CD4-positive, alpha-beta memory T cell (primary cell): ENCODE measurements at regions of chr3 and their contacts with region 1.

Region 1: DNA sequence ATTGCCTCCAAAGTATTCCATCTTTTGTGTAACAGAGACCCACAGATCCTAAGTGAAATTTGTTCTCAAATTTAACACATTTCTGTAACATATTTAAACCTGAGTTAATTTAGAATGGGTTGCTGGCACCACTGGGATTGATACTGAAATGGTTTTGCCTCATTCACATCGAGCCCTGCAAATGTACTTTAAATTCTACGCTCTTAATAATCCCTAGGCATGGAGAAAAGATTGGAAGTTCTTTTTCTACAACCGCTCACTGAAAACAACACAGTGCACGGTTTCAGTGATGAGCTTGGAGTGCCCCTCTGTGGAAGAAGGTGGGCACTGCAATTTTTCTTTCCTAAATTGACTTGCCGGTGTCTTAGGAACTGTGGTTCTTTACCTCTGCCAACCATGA is 109.9 kb upstream of the ATP11B start:
- DNase-seq: peak; percentile 37 to 64 (median 51)
- H3K4me3 ChIP-seq: no peak overlapping the region
- H3K4me3 Mint-ChIP-seq: peak overlapping the region; percentile 30 to 88 (median 71)
- H3K27ac ChIP-seq: no peak overlapping the region
- H3K27ac Mint-ChIP-seq: peak overlapping the region in 1 of 7 donors; percentile 36
- H3K4me1 ChIP-seq: peaks cover 15% of the 10 kb centered on the region
- H3K4me1 Mint-ChIP-seq: peaks cover 6 to 10% (median 8%) of the 10 kb centered on the region in 4 donors
- H3K27me3 ChIP-seq: peaks cover 7% of the 10 kb centered on the region
- H3K27me3 Mint-ChIP-seq: peaks cover 30% of the 10 kb centered on the region in 2 donors

Region 2: DNA sequence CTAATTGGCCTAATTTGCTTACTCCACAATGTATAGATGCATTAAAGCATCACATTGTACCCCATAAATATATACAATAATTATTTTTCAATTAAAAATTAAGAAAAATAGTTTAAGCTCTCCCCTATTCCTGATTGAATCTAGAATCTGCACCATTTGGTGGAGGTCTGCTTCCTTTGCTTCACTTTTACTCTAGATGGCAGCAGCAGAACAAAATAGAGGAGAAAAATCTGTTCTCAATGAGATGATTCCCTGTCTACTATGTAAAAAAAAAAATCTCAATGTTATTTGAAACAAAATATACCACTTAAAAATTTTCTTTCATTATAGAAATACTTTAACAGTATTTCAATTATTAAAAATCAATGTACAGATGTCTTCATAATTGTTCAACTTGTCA is 1880.6 kb before region 1 on chr3:
- CTCF ChIA-PET with region 1: no interaction called
- POLR2A ChIA-PET with region 1: no interaction called
- intact Hi-C with region 1: loop called (anchors 2 kb)
- DNase-seq: no peak
- H3K4me3 ChIP-seq: no peak overlapping the region
- H3K4me3 Mint-ChIP-seq: no peak overlapping the region
- H3K27ac ChIP-seq: no peak overlapping the region
- H3K27ac Mint-ChIP-seq: no peak overlapping the region
- H3K4me1 ChIP-seq: no peaks in the 10 kb centered on the region
- H3K4me1 Mint-ChIP-seq: no peaks in the 10 kb centered on the region
- H3K27me3 ChIP-seq: no peaks in the 10 kb centered on the region
- H3K27me3 Mint-ChIP-seq: peaks cover 2 to 3% of the 10 kb centered on the region in 2 donors

Region 3: DNA sequence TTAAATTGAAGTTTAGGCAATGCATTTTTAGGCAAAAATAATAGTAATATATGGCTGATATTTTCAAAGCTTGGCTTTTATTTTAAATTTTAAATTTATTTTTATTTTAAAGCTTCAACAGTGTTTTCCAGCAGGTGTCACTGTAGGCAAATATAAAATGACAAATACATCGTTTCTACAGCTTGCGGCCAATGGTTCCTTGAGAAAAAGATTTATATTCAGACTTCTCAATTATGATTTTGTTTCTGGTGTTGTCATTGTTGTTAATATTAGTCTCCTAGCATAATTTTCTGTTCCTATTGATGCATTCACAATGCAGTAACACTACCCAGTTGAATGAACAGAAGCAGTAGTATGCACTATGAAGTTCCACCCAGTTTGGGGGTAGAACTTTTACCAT is 1473.2 kb before region 1 on chr3:
- CTCF ChIA-PET with region 1: interaction called, 3 read pairs
- POLR2A ChIA-PET with region 1: no interaction called
- intact Hi-C with region 1: loop called (anchors 5 kb)
- DNase-seq: no peak
- H3K4me3 ChIP-seq: no peak overlapping the region
- H3K4me3 Mint-ChIP-seq: no peak overlapping the region
- H3K27ac ChIP-seq: no peak overlapping the region
- H3K27ac Mint-ChIP-seq: no peak overlapping the region
- H3K4me1 ChIP-seq: no peaks in the 10 kb centered on the region
- H3K4me1 Mint-ChIP-seq: no peaks in the 10 kb centered on the region
- H3K27me3 ChIP-seq: no peaks in the 10 kb centered on the region
- H3K27me3 Mint-ChIP-seq: no peaks in the 10 kb centered on the region

Region 4: DNA sequence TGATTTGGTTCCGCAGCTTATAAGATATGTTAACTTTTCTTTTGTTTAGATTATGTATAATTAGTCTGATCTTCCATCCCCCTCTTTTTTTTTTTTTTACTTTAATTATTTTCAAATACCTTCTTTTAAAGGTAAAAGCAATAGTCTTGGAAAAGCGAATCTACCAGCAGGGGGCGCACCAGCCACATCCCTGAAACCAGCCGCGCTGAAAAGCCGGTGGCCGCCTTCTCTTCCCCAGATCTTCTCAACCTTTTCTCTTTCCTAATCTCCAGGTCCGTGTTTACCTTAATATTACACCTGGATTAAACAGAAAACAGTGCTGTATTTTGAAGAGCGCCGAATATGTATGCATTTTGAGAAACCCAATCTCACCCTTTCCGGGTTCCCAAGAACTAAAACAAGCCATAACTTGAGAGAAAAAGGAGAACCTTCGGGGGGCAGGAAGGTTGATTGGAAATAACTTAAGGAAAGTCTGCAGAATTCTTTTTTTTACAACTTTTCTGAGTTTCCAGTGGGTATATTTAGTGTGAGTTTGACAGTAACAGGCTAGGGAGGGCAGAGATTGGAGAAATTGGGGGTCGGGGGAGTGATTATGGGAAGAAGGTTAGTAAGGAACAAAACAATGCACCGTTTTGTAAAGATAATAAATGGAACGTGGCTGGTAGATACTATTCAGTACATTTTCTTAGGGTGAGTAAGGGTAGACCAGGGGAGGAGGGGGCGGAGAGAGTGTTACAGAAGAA is 973.7 kb before region 1 on chr3:
- CTCF ChIA-PET with region 1: interaction called, 21 read pairs
- POLR2A ChIA-PET with region 1: no interaction called
- intact Hi-C with region 1: no loop called
- DNase-seq: peak in 3 of 5 donors; percentile 31 to 42 (median 41)
- H3K4me3 ChIP-seq: no peak overlapping the region
- H3K4me3 Mint-ChIP-seq: peak overlapping the region in 7 of 8 donors; percentile 13 to 74 (median 47)
- H3K27ac ChIP-seq: no peak overlapping the region
- H3K27ac Mint-ChIP-seq: peak overlapping the region in 2 of 7 donors; percentile 58 to 68
- H3K4me1 ChIP-seq: peaks cover 11% of the 10 kb centered on the region
- H3K4me1 Mint-ChIP-seq: peaks cover 5 to 14% (median 6%) of the 10 kb centered on the region in 4 donors
- H3K27me3 ChIP-seq: peaks cover 57% of the 10 kb centered on the region
- H3K27me3 Mint-ChIP-seq: peaks cover 46 to 51% of the 10 kb centered on the region in 2 donors

Region 5: DNA sequence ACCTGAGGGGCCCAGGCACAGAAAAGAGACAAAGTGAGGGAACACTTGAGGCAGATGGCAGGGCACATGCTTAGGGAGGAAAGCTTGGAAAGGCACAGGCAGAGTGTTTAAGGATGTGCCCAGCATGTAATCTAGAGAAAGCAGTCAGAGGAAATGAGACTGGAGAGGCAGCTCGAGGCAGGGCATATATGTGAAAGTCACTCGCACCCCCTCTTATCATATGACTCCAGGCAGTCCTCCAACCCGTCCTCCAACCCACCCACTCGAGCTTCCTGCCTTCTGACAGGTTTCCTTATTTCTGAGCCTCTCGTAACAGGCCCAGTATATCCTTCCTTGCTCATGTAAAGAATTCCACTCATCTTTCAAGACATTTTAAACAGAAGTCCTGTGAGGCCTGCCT is 677.8 kb before region 1 on chr3:
- CTCF ChIA-PET with region 1: no interaction called
- POLR2A ChIA-PET with region 1: no interaction called
- intact Hi-C with region 1: no loop called
- DNase-seq: no peak
- H3K4me3 ChIP-seq: no peak overlapping the region
- H3K4me3 Mint-ChIP-seq: no peak overlapping the region
- H3K27ac ChIP-seq: no peak overlapping the region
- H3K27ac Mint-ChIP-seq: no peak overlapping the region
- H3K4me1 ChIP-seq: no peaks in the 10 kb centered on the region
- H3K4me1 Mint-ChIP-seq: no peaks in the 10 kb centered on the region
- H3K27me3 ChIP-seq: no peaks in the 10 kb centered on the region
- H3K27me3 Mint-ChIP-seq: no peaks in the 10 kb centered on the region